Activated CD4-positive, alpha-beta memory T cell treated with anti-CD3 and anti-CD28 coated beads, Interleukin-2, amount 10 ng/mL, durations not matched to agents 7 days and 5 days (primary cell): ENCODE measurements at regions of chr15 and their contacts with region 1.

Region 1: GRCh38 chr15:48975472-48976419 is 12.0 kb upstream of the SHC4 start:
- DNase-seq: peak; percentile 80
- H3K4me3 Mint-ChIP-seq: peak overlapping the region; percentile 44
- H3K27ac Mint-ChIP-seq: no peak overlapping the region
- H3K4me1 Mint-ChIP-seq: peaks cover 9% of the 10 kb centered on the region
- H3K27me3 Mint-ChIP-seq: peaks cover 13% of the 10 kb centered on the region

Region 2: DNA sequence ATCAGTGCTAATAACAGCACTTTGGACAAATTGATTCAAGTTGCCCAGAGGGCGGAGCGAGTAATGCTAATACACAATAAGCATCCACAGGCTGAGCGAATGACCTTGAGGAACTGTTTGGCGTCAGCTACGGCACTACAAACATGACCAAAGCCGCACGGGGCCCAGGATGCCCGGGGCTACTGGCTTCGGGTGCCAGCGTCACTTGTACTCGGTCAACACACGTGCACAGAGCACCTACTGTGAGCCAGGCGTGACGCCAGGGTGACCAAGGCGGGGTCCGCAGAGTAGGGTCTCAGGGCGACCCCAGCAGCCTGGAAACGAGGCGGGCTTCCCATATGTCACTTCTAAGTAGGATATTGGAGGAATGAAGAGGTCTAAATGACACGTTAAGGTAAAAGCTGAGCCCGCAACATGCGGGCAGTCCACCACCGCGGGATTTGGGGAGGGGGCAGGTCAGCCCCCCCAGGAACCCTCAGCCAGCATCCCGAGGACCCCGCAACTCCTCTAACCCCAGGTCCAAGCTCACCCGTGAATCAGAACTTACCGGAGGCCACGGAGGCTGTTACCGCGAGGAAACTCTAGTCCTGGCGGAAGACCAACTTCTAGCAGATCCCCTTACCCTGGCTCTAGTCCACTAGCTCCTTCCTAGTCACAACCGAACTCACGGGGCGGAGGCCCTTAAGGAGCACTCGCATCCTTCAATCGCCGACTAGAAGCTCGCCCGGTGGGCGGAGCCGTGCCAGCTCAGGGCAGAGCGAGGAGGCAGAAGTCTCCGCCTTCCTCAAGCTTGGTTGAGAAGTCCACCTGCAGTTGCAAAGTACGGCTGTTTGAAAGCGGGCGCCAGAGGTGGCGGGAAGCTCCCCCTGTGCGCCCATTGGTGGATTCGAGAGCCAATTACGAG is 165.1 kb before region 1 on chr15 and contains the start of gene CEP152:
- CTCF ChIA-PET with region 1: interaction called, 11 read pairs
- POLR2A ChIA-PET with region 1: interaction called, 4 read pairs
- DNase-seq: peak; percentile 99
- H3K4me3 Mint-ChIP-seq: peak within 1 kb of the TSS; percentile 84
- H3K27ac Mint-ChIP-seq: peak within 1 kb of the TSS; percentile 93
- H3K4me1 Mint-ChIP-seq: peaks cover 41% of the 10 kb centered on the region
- H3K27me3 Mint-ChIP-seq: peaks cover 15% of the 10 kb centered on the region
- total RNA-seq, gene CEP152: 41.5 to 43.1 TPM

Region 3: GRCh38 chr15:48868536-48868935 is 107.2 kb before region 1 on chr15:
- CTCF ChIA-PET with region 1: interaction called, 43 read pairs
- POLR2A ChIA-PET with region 1: no interaction called
- DNase-seq: no peak
- H3K4me3 Mint-ChIP-seq: no peak overlapping the region
- H3K27ac Mint-ChIP-seq: no peak overlapping the region
- H3K4me1 Mint-ChIP-seq: no peaks in the 10 kb centered on the region
- H3K27me3 Mint-ChIP-seq: peaks cover 18% of the 10 kb centered on the region

Region 4: GRCh38 chr15:48940448-48940893 is 35.3 kb before region 1 on chr15:
- CTCF ChIA-PET with region 1: interaction called, 18 read pairs
- POLR2A ChIA-PET with region 1: no interaction called
- DNase-seq: peak; percentile 53
- H3K4me3 Mint-ChIP-seq: peak overlapping the region; percentile 11
- H3K27ac Mint-ChIP-seq: peak overlapping the region; percentile 63
- H3K4me1 Mint-ChIP-seq: peaks cover 28% of the 10 kb centered on the region
- H3K27me3 Mint-ChIP-seq: peaks cover 10% of the 10 kb centered on the region

Region 5: DNA sequence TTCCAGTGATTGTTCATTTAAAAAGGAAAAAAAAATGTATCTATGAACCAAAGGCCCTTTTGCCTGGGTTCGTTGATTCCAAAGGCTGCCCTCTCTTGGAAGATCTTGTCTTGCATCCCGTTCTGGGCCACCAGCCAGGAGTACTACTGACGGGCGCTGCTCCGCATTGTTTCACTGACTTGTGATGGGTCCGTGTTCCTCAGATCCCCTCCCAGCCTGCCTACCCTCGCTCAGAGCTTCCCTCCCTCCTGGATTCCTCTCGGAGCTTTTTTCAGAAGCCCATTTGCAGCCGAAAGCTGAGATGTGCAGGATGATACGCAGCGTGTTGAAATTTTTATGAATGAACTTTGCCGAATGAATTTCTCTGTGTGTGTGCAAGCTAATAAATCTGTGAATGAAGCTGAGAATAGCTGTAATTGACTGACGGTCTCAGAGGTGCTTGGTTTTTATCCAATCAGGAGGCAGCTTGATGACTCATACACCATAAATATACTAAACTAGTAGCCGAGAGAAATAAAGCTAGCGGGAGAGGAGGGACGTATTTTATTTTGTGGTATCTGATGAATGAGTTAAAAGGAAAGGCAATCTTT is 12.1 kb before region 1 on chr15 and contains the start of gene SHC4:
- CTCF ChIA-PET with region 1: interaction called, 113 read pairs
- POLR2A ChIA-PET with region 1: interaction called, 29 read pairs
- DNase-seq: peak; percentile 23
- H3K4me3 Mint-ChIP-seq: peak within 1 kb of the TSS; percentile 67
- H3K27ac Mint-ChIP-seq: peak within 1 kb of the TSS; percentile 58
- H3K4me1 Mint-ChIP-seq: peaks cover 51% of the 10 kb centered on the region
- H3K27me3 Mint-ChIP-seq: peaks cover 35% of the 10 kb centered on the region
- total RNA-seq, gene SHC4: 1.9 to 2.8 TPM

Region 6: DNA sequence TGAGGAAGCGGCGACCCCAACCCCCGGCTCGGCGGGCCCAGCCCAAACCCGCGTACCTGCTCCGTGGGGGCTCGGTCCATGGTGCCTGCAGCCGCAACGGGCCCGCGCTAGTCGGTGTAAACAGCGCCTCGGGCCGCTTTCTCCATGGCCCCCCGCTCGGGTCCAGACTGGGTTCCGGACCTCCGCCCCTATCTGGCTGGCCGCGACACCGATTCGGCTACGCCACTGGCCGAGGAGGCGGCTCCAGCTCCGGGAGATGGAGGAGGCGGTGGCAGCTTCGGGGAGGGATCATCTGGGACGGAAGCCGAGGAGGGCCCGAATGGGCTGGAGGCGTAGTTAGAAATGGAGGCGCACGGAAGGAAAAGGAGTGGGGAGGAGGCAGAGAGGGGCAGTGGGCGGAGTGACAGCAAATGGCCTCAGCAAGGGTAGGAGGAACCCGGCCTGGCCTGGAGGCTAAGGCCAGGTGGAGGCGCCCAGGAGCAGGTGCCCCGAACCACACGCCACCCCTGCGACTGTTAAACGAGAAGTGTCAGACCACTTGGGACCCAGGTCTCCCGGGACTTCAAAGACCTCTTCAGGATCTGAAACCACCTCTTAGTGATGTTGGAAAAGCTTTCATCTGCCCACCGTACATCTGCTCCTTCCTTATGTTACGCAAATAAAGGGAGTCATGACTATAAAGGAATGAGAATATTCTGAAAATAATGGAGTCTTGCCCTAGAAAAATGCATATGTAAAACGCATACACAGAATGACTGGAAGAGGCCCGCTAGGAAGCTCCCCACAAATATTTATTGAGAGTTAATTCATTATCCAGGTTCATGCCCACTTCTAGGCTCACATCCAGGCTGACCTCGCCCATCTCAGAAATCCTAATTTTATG is 70.7 kb after region 1 on chr15 and contains the start of gene SECISBP2L:
- CTCF ChIA-PET with region 1: interaction called, 12 read pairs
- POLR2A ChIA-PET with region 1: no interaction called
- DNase-seq: peak; percentile 93
- H3K4me3 Mint-ChIP-seq: peak within 1 kb of the TSS; percentile 95
- H3K27ac Mint-ChIP-seq: peak within 1 kb of the TSS; percentile 80
- H3K4me1 Mint-ChIP-seq: peaks cover 26% of the 10 kb centered on the region
- H3K27me3 Mint-ChIP-seq: no peaks in the 10 kb centered on the region
- total RNA-seq, gene SECISBP2L: 35.7 to 36.9 TPM

Region 7: DNA sequence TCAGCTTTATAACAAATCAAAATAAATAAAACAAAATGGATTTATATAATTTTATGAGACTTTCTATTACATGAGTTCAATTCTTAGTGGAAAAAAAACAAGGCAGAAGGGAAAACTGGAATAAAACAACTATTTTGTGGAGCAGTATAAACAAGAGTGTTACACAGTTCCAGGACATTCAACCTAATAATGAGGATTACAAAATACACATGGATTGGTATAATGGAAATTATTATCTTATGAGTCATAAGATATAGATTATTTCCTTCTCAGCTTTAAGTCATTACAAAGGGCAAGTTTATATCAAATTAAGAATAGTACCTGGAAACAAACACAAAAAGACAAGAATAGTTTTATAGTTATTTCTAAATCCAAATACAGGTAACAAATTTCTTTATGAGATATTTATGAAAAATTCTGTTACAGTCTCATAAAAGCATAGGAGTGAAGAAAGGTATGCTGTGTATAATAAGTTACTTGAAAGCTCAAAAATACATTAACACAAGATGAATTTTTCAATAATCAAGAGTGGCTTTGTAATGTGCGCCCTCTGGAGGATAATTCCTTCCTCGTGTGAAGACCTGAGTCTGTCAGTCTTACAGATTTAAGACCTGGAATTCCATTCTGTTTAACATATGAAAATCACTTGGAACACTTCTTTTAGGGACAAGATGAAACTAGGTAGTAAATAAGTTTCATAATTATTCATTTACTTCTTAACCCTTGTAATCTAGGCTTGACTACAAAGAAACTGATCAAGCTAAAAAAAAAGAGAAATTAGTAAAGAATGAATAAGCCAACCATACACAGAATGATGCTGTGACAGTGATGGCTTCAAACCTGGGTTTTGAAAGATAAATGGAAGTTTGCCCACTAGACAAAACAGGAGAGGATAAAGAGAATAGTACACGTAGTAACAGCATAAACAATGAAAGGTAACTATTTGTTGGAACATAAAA is 170.2 kb after region 1 on chr15:
- CTCF ChIA-PET with region 1: interaction called, 17 read pairs
- POLR2A ChIA-PET with region 1: no interaction called
- DNase-seq: peak; percentile 23
- H3K4me3 Mint-ChIP-seq: no peak overlapping the region
- H3K27ac Mint-ChIP-seq: no peak overlapping the region
- H3K4me1 Mint-ChIP-seq: peaks cover 28% of the 10 kb centered on the region
- H3K27me3 Mint-ChIP-seq: no peaks in the 10 kb centered on the region